ENCODE measurements at regions of chr21 and their contacts with region 1.

Region 1: GRCh38 chr21:34754690-34755647 is 86.2 kb downstream of the CLIC6 start:
- DNase-seq: no peak

Region 2: DNA sequence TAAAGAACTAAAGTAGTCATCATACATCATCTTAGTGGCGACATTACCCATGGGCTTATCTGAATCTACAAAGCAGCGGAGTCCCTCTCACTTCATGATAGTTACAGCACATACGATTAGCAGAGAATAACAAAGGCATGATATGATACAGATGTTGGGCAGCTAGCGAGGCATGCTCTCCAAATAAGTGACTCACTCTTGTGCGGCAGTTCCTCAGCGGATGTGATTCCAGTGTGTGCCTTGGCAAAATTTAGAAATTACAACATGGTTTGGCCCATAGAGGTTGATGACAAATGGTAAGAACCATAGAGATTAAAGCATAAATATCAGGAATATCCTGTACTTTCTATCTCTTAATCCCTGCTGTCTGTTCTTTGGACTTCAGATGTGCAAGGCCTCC is 1935.3 kb before region 1 on chr21:
- intact Hi-C with region 1: no loop called
- DNase-seq: no peak

Region 3: DNA sequence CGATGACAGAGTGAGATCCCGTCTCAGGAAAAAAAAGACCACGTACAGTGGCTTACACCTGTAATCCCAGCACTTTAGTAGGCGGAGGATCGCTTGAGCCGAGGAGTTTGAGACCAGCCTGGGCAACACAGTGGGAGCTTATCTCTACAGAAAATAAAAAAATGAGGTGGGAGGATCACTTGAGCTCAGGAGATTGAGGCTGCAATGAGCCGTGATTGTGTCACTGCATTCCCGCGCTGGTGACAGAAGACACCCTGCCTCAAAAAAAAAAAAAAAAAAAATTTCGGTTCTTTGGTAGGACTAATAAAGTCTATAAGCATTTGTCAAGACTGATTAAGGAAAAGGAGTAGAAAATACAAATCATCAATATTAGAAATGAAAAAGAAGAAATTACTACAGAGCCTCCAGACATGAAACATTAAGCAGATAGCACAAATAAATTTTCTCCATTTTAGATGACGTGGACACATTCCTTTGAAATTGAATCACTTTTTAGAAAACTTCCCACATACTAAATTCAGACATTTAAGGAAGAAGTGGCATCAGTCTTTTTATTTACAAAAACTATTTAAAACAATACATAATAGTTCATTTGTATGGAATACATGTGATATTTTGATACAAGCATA is 1595.4 kb after region 1 on chr21:
- intact Hi-C with region 1: loop called in 1 of 2 experiments (anchors 5 kb)
- DNase-seq: no peak

Measured in posterior vena cava (tissue), 2 donors.